ENCODE measurements at regions of chr18 and their contacts with region 1.

Region 1: GRCh38 chr18:23503038-23503962 is at the start of gene RMC1:
- DNase-seq: peak; percentile 98
- H3K4me3 ChIP-seq: peak within 1 kb of the TSS; percentile 66 to 100 (median 98)
- H3K27ac ChIP-seq: peak within 1 kb of the TSS; percentile 89 to 96 (median 94)
- H3K4me1 ChIP-seq: peaks cover 0 to 29% (median 24%) of the 10 kb centered on the region in 4 donors
- H3K27me3 ChIP-seq: no peaks in the 10 kb centered on the region
- CTCF ChIP-seq: no peak
- EP300 ChIP-seq: no peak
- POLR2A ChIP-seq: peak; percentile 70 to 91
- total RNA-seq, gene RMC1: 11.8 to 21.6 (median 17.4) TPM

Region 2: GRCh38 chr18:23437357-23438045 is 65.8 kb before region 1 on chr18:
- intact Hi-C with region 1: loop called (anchors 2 kb)
- DNase-seq: peak; percentile 90
- H3K4me3 ChIP-seq: peak overlapping the region; percentile 66 to 79 (median 68)
- H3K27ac ChIP-seq: peak overlapping the region; percentile 56 to 69 (median 64)
- H3K4me1 ChIP-seq: peaks cover 0 to 14% (median 12%) of the 10 kb centered on the region in 4 donors
- H3K27me3 ChIP-seq: no peaks in the 10 kb centered on the region
- CTCF ChIP-seq: no peak
- EP300 ChIP-seq: no peak
- POLR2A ChIP-seq: no peak

Region 3: DNA sequence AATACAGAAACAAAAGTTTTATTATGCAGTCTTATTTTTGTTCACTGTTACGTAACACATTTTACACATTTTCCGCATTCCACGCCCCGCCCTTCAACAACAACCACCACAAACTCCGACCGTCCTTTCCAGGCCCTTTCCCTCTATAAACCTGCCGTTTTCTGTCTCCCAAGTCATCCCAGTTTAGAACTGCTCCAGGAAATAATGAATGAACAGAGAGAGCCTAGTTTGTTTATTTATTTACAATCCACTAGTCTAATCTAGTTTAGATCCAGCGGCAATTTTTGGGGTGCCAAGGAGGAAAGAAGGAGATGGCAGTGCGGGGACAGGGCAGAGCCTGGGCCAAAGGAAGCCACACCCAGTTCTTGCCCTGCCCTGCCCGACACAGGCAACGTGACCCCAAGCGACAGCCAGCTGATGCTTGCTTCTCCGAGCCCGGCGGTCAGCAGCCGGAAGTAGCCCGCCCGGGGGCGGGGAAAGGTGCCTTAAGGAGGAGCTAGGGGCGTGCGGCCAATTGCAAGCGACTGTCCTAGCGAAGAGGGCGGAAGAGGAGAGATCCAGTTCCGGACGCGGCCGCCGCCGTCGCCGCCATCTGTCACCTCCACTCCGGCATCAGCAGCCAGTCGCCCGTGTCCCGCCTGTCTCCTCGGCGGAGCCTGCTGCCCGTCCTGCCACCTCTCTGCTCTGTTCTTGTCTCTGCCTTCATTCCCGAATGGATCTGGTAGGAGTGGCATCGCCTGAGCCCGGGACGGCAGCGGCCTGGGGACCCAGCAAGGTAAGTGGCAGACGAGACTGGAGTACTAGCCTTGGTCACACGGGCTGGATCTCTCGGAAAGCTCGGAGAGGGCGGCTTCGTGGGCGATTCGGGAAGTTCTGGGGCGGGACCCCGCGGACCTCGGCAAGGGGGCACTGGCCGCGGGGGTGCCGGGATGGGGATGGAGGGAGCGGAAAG is 50.3 kb before region 1 on chr18 and contains the start of gene RIOK3:
- intact Hi-C with region 1: loop called (anchors 2 kb)
- DNase-seq: peak; percentile 98
- H3K4me3 ChIP-seq: peak within 1 kb of the TSS; percentile 75 to 96 (median 78)
- H3K27ac ChIP-seq: peak within 1 kb of the TSS; percentile 89 to 97 (median 93)
- H3K4me1 ChIP-seq: peaks cover 0 to 41% (median 34%) of the 10 kb centered on the region in 4 donors
- H3K27me3 ChIP-seq: no peaks in the 10 kb centered on the region
- CTCF ChIP-seq: no peak
- EP300 ChIP-seq: peak in 1 of 4 donors; percentile 33
- POLR2A ChIP-seq: peak; percentile 90 to 93
- total RNA-seq, gene RIOK3: 38.2 to 54.6 (median 45.6) TPM

Region 4: DNA sequence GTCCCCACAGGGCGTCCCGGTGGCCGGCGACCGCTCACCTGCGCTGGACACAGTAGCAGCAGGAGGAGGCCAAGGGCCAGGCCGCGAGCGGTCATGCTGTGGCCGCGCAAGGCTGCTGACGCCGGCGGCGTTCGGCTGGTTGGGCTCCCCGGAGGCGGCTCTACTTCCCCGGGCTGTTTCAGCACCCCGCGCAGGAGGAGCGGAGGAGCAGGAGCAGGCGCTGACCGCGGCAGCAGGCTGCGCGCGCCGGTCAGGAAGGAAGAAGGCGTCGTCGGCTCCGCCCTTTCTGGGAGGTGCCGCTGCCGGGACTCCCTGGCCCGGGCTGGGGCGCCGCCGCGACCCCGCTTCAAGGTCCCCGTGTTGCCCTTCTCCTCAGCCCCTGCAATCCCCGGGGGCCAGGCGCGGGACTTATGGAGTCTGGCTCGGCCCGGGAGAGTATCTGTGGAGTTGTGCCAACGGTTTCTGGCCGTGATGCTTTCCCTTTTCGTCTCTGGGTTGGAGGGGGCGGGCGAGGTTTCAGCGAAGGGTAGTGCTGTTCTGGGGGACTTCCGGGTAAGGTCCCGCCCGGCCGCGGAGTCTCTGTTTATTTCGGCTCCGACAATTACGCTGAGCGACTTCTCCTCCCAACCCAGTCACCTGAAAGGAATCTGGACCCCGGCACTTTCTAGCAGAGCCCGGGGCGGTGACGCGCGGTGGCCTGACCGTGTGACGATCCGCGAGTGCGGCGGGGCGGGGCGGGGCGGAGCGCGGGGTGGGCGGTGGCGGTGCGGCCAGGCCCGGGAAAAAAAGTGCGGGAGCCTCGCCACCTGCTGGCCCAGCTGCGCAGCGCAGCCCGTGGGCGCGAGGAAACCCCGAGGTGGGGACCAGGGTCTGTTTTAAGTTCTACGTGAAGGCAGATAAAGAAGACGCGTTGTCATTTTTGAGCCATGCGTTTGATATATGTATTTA is 83.2 kb after region 1 on chr18 and contains the start of gene NPC1:
- intact Hi-C with region 1: loop called (anchors 5 kb)
- DNase-seq: peak; percentile 97
- H3K4me3 ChIP-seq: peak within 1 kb of the TSS; percentile 78 to 87 (median 82)
- H3K27ac ChIP-seq: peak within 1 kb of the TSS; percentile 98 to 99 (median 99)
- H3K4me1 ChIP-seq: peaks cover 0 to 33% (median 22%) of the 10 kb centered on the region in 4 donors
- H3K27me3 ChIP-seq: no peaks in the 10 kb centered on the region
- CTCF ChIP-seq: peak; percentile 77 to 96 (median 82)
- EP300 ChIP-seq: peak in 1 of 4 donors; percentile 47
- POLR2A ChIP-seq: peak; percentile 85 to 91
- total RNA-seq, gene NPC1: 34.9 to 59.2 (median 48.1) TPM

Region 5: GRCh38 chr18:23828426-23828825 is 325.1 kb after region 1 on chr18:
- intact Hi-C with region 1: loop called (anchors 10 kb)
- DNase-seq: no peak
- H3K4me3 ChIP-seq: no peak overlapping the region
- H3K27ac ChIP-seq: no peak overlapping the region
- H3K4me1 ChIP-seq: peaks cover 0 to 26% (median 24%) of the 10 kb centered on the region in 4 donors
- H3K27me3 ChIP-seq: no peaks in the 10 kb centered on the region
- CTCF ChIP-seq: no peak
- EP300 ChIP-seq: no peak
- POLR2A ChIP-seq: no peak

Measured in sigmoid colon (tissue), 7 donors.